Activated CD8-positive, alpha-beta T cell treated with anti-CD3 and anti-CD28 coated beads for 36 hours (primary cell): ENCODE measurements at regions of chr17 and their contacts with region 1.

Region 1: GRCh38 chr17:76278952-76279741 is 14.0 kb downstream of the UBALD2 start:
- DNase-seq: peak; percentile 90
- ATAC-seq: peak; percentile 85
- H3K4me3 Mint-ChIP-seq: no peak overlapping the region
- H3K27ac Mint-ChIP-seq: no peak overlapping the region
- H3K4me1 Mint-ChIP-seq: peaks cover 26% of the 10 kb centered on the region
- H3K27me3 Mint-ChIP-seq: no peaks in the 10 kb centered on the region
- CTCF ChIP-seq: peak; percentile 98

Region 2: GRCh38 chr17:76103274-76104139 is 175.6 kb before region 1 on chr17 and contains the start of gene EXOC7:
- CTCF ChIA-PET with region 1: interaction called, 18 read pairs
- POLR2A ChIA-PET with region 1: interaction called, 13 read pairs
- intact Hi-C with region 1: no loop called
- DNase-seq: peak; percentile 94
- ATAC-seq: peak; percentile 95
- H3K4me3 Mint-ChIP-seq: peak within 1 kb of the TSS; percentile 93
- H3K27ac Mint-ChIP-seq: peak within 1 kb of the TSS; percentile 97
- H3K4me1 Mint-ChIP-seq: peaks cover 25% of the 10 kb centered on the region
- H3K27me3 Mint-ChIP-seq: no peaks in the 10 kb centered on the region
- CTCF ChIP-seq: no peak
- total RNA-seq, gene EXOC7: 53.5 to 64.9 TPM

Region 3: GRCh38 chr17:76132574-76133338 is 146.4 kb before region 1 on chr17:
- CTCF ChIA-PET with region 1: interaction called, 236 read pairs
- POLR2A ChIA-PET with region 1: interaction called, 13 read pairs
- intact Hi-C with region 1: no loop called
- DNase-seq: no peak
- ATAC-seq: no peak
- H3K4me3 Mint-ChIP-seq: no peak overlapping the region
- H3K27ac Mint-ChIP-seq: no peak overlapping the region
- H3K4me1 Mint-ChIP-seq: peaks cover 18% of the 10 kb centered on the region
- H3K27me3 Mint-ChIP-seq: no peaks in the 10 kb centered on the region
- CTCF ChIP-seq: no peak

Region 4: DNA sequence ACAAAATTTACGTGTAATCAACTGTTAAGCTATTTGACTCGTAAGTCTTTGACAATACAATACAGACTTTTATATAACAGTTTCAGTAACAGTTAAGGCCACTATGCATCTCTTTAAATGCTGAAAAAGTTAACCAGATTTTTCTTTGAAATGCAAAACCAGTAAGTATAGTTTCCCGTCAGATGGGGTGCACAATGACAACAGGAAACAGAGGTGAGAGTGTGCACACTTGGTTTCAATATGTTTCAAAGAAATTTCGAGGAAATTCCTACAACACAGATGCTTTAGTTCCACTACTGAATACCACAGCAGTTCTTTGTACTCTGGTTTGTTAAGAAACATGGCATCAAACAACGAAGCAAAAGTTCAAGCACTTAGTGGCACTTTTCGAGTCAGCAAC is 87.3 kb before region 1 on chr17:
- CTCF ChIA-PET with region 1: interaction called, 50 read pairs
- POLR2A ChIA-PET with region 1: interaction called, 700 read pairs
- intact Hi-C with region 1: no loop called
- DNase-seq: peak; percentile 65
- ATAC-seq: peak; percentile 82
- H3K4me3 Mint-ChIP-seq: peak overlapping the region; percentile 68
- H3K27ac Mint-ChIP-seq: peak overlapping the region; percentile 97
- H3K4me1 Mint-ChIP-seq: peaks cover 77% of the 10 kb centered on the region
- H3K27me3 Mint-ChIP-seq: no peaks in the 10 kb centered on the region
- CTCF ChIP-seq: no peak

Region 5: GRCh38 chr17:76255801-76256429 is 23.2 kb before region 1 on chr17:
- CTCF ChIA-PET with region 1: interaction called, 14 read pairs
- POLR2A ChIA-PET with region 1: interaction called, 960 read pairs
- intact Hi-C with region 1: no loop called
- DNase-seq: peak; percentile 15
- ATAC-seq: no peak
- H3K4me3 Mint-ChIP-seq: peak overlapping the region; percentile 76
- H3K27ac Mint-ChIP-seq: peak overlapping the region; percentile 95
- H3K4me1 Mint-ChIP-seq: peaks cover 49% of the 10 kb centered on the region
- H3K27me3 Mint-ChIP-seq: no peaks in the 10 kb centered on the region
- CTCF ChIP-seq: no peak

Region 6: DNA sequence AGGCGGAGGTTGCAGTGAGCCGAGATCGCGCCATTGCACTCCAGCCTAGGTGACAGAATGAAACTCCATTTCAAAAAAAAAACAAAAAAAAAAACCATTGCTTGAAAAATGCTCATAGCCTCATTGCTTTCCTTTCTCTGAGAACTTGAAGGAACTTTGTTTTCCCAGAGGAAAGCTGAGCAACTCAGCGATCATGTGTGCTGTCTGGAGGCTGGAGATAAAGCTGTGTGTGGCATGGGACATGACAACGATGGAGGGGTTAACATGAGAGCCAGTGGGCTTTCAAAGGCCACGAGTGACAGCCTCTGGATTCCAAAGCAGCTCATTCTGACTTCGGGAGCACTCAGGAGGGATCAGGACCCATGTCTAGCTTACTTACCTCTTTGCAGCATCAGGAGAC is 50.5 kb after region 1 on chr17:
- CTCF ChIA-PET with region 1: no interaction called
- POLR2A ChIA-PET with region 1: no interaction called
- intact Hi-C with region 1: no loop called
- DNase-seq: no peak
- ATAC-seq: no peak
- H3K4me3 Mint-ChIP-seq: no peak overlapping the region
- H3K27ac Mint-ChIP-seq: no peak overlapping the region
- H3K4me1 Mint-ChIP-seq: no peaks in the 10 kb centered on the region
- H3K27me3 Mint-ChIP-seq: no peaks in the 10 kb centered on the region
- CTCF ChIP-seq: no peak